ENCODE measurements at regions of chr6 and their contacts with region 1.

Region 1: GRCh38 chr6:31729515-31729978 is 448 bp upstream of the DDAH2 start:
- DNase-seq: peak; percentile 83 to 96
- H3K4me3 ChIP-seq: peak overlapping the region; percentile 69 to 96
- H3K27ac ChIP-seq: peak overlapping the region; percentile 95 to 99
- H3K4me1 ChIP-seq: peaks cover 22 to 31% of the 10 kb centered on the region in 2 donors
- H3K27me3 ChIP-seq: no peaks in the 10 kb centered on the region
- CTCF ChIP-seq: peak in 1 of 3 experiments; percentile 68

Region 2: DNA sequence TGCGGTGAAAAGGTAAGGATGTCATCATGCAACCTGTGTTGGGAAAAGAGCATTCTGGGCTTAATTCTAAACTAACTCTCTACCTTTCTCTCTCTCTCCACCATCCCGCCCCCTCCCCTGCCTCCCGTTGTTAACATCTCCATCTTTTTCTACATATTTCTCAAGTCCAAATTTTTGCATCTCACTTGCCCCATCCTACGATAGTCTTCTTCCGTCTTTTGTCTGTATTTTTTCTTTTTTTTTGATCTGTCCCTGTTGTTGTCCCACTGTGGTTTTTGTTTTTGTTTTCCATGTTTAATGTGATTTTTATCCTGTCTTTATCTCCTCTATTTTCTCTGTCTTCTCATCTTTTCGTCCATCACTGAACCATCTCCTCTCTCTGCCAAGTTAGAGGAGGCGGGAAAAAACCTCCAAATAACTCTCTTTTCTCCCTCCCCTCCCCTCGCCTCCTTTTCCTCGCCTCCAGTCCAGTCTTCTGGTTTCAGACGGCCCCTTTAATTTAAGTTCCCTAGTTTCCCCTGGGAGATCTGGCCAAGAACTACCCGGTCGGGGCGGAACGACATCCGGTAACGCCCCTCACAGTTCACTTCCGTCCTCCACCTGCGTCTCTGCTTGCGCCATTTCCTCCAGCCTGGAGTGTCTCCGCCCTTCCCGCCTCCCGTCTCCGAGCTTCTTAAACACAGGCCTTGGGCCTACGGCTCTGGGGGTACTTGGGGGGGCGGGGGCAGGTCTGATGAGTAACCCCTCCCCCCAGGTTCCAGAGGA is 182.4 kb before region 1 on chr6 and contains the start of gene NFKBIL1:
- intact Hi-C with region 1: loop called (anchors 5 kb)
- DNase-seq: peak; percentile 89 to 99
- H3K4me3 ChIP-seq: peak within 1 kb of the TSS; percentile 58 to 67
- H3K27ac ChIP-seq: peak within 1 kb of the TSS; percentile 72 to 84
- H3K4me1 ChIP-seq: peaks cover 6 to 15% of the 10 kb centered on the region in 2 donors
- H3K27me3 ChIP-seq: no peaks in the 10 kb centered on the region
- CTCF ChIP-seq: no peak
- total RNA-seq, gene NFKBIL1: 71.5 TPM

Region 3: GRCh38 chr6:31660381-31661261 is 68.9 kb before region 1 on chr6 and contains the start of gene C6orf47:
- intact Hi-C with region 1: no loop called
- DNase-seq: peak; percentile 57 to 92
- H3K4me3 ChIP-seq: peak within 1 kb of the TSS; percentile 77 to 79
- H3K27ac ChIP-seq: peak within 1 kb of the TSS; percentile 84 to 88
- H3K4me1 ChIP-seq: peaks cover 18 to 45% of the 10 kb centered on the region in 2 donors
- H3K27me3 ChIP-seq: no peaks in the 10 kb centered on the region
- CTCF ChIP-seq: no peak
- total RNA-seq, gene C6orf47: 20.9 TPM

Region 4: GRCh38 chr6:31680840-31681671 is 48.5 kb before region 1 on chr6 and contains the start of gene LY6G5C:
- intact Hi-C with region 1: loop called (anchors 2 kb)
- DNase-seq: peak; percentile 47 to 91
- H3K4me3 ChIP-seq: peak within 1 kb of the TSS; percentile 62 to 86
- H3K27ac ChIP-seq: peak within 1 kb of the TSS; percentile 62 to 64
- H3K4me1 ChIP-seq: peaks cover 2 to 5% of the 10 kb centered on the region in 2 donors
- H3K27me3 ChIP-seq: no peaks in the 10 kb centered on the region
- CTCF ChIP-seq: peak; percentile 81 to 83 (median 82)
- total RNA-seq, gene LY6G5C: 0.96 TPM

Region 5: GRCh38 chr6:31702819-31703522 is 26.6 kb before region 1 on chr6 and contains the start of gene ABHD16A:
- intact Hi-C with region 1: loop called (anchors 1 kb)
- DNase-seq: peak; percentile 97 to 100
- H3K4me3 ChIP-seq: peak within 1 kb of the TSS; percentile 72 to 78
- H3K27ac ChIP-seq: peak within 1 kb of the TSS; percentile 92 to 97
- H3K4me1 ChIP-seq: peaks cover 13 to 21% of the 10 kb centered on the region in 2 donors
- H3K27me3 ChIP-seq: no peaks in the 10 kb centered on the region
- CTCF ChIP-seq: no peak
- total RNA-seq, gene ABHD16A: 28.0 TPM

Region 6: GRCh38 chr6:31739639-31740396 is 10.3 kb after region 1 on chr6 and contains the start of gene MSH5:
- intact Hi-C with region 1: loop called (anchors 1 kb)
- DNase-seq: peak; percentile 96 to 99
- H3K4me3 ChIP-seq: peak within 1 kb of the TSS; percentile 61 to 73
- H3K27ac ChIP-seq: peak within 1 kb of the TSS; percentile 56 to 94
- H3K4me1 ChIP-seq: peaks cover 9 to 23% of the 10 kb centered on the region in 2 donors
- H3K27me3 ChIP-seq: no peaks in the 10 kb centered on the region
- CTCF ChIP-seq: no peak
- total RNA-seq, gene MSH5: 17.7 TPM

Region 7: GRCh38 chr6:31795616-31796298 is 66.2 kb after region 1 on chr6 and contains the start of gene VARS1:
- intact Hi-C with region 1: loop called (anchors 2 kb)
- DNase-seq: peak; percentile 72 to 94
- H3K4me3 ChIP-seq: peak within 1 kb of the TSS; percentile 81 to 83
- H3K27ac ChIP-seq: peak within 1 kb of the TSS; percentile 88 to 92
- H3K4me1 ChIP-seq: peaks cover 4 to 18% of the 10 kb centered on the region in 2 donors
- H3K27me3 ChIP-seq: no peaks in the 10 kb centered on the region
- CTCF ChIP-seq: peak; percentile 71 to 97 (median 89)
- total RNA-seq, gene VARS1: 48.3 TPM

Region 8: GRCh38 chr6:31806465-31807272 is 77.1 kb after region 1 on chr6 and contains the start of gene LSM2:
- intact Hi-C with region 1: no loop called
- DNase-seq: peak; percentile 90 to 99
- H3K4me3 ChIP-seq: peak within 1 kb of the TSS; percentile 79 to 82
- H3K27ac ChIP-seq: peak within 1 kb of the TSS; percentile 95 to 96
- H3K4me1 ChIP-seq: peaks cover 0 to 15% of the 10 kb centered on the region in 2 donors
- H3K27me3 ChIP-seq: no peaks in the 10 kb centered on the region
- CTCF ChIP-seq: peak in 2 of 3 experiments; percentile 24 to 30
- total RNA-seq, gene LSM2: 61.3 TPM

Region 9: DNA sequence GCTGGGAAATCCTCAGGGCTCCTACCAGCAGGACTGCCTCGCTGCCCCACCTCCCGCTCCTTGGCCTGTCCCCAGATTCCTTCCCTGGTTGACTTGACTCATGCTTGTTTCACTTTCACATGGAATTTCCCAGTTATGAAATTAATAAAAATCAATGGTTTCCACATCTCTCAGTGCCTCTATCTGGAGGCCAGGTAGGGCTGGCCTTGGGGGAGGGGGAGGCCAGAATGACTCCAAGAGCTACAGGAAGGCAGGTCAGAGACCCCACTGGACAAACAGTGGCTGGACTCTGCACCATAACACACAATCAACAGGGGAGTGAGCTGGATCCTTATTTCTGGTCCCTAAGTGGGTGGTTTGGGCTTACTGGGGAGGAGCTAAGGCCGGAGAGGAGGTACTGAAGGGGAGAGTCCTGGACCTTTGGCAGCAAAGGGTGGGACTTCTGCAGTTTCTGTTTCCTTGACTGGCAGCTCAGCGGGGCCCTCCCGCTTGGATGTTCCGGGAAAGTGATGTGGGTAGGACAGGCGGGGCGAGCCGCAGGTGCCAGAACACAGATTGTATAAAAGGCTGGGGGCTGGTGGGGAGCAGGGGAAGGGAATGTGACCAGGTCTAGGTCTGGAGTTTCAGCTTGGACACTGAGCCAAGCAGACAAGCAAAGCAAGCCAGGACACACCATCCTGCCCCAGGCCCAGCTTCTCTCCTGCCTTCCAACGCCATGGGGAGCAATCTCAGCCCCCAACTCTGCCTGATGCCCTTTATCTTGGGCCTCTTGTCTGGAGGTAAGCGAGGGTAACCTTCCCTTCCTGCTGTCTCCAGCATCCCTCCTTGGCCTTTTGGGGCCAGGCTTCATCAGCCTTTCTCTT is 216.2 kb after region 1 on chr6 and contains the start of gene CFB:
- intact Hi-C with region 1: loop called (anchors 1 kb)
- DNase-seq: peak; percentile 75 to 94
- H3K4me3 ChIP-seq: peak within 1 kb of the TSS; percentile 28 to 59
- H3K27ac ChIP-seq: peak within 1 kb of the TSS; percentile 91 to 93
- H3K4me1 ChIP-seq: peaks cover 3 to 16% of the 10 kb centered on the region in 2 donors
- H3K27me3 ChIP-seq: no peaks in the 10 kb centered on the region
- CTCF ChIP-seq: no peak
- total RNA-seq, gene CFB: 132 TPM

Measured in ascending aorta (tissue), 2 donors.